Activated CD8-positive, alpha-beta T cell treated with anti-CD3 and anti-CD28 coated beads for 36 hours (primary cell): ENCODE measurements at regions of chr17 and their contacts with region 1.

Region 1: DNA sequence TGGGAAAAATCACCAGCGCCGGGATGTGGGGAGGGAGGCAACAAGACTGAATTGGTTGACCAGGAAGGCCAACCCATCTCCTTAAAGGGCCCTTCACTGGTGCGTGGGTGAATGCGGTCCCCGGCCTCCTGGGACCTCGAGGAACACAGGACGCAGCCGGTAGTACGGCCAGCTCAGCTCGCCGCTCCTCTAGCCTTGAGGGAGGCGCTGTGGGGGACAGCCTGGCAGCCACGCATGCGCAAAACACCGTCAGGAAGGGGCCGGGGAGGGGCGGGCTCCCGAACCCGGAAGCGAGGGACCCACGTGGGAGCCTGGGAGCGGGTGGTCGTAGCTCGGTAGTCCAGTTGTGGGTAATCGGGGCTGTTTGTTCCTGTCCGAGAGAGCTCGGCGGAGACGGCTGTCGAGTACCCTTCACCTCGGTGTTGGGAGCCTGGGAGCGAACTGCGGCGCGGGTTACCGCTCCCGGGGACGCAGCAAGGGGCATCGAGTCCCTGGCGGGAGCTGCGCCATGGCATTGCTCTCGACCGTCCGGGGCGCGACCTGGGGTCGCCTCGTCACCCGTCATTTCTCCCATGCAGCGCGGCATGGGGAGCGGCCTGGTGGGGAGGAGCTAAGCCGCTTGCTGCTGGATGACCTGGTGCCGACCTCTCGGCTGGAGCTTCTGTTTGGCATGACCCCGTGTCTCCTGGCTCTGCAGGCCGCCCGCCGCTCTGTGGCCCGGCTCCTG is at the start of gene MRM1:
- DNase-seq: peak; percentile 92
- ATAC-seq: peak; percentile 88
- H3K4me3 Mint-ChIP-seq: peak within 1 kb of the TSS; percentile 91
- H3K27ac Mint-ChIP-seq: peak within 1 kb of the TSS; percentile 87
- H3K4me1 Mint-ChIP-seq: peaks cover 37% of the 10 kb centered on the region
- H3K27me3 Mint-ChIP-seq: no peaks in the 10 kb centered on the region
- CTCF ChIP-seq: no peak
- total RNA-seq, gene MRM1: 24.5 to 27.4 TPM

Region 2: GRCh38 chr17:36586138-36586537 is 15.3 kb before region 1 on chr17:
- CTCF ChIA-PET with region 1: interaction called, 45 read pairs
- POLR2A ChIA-PET with region 1: interaction called, 3 read pairs
- intact Hi-C with region 1: no loop called
- DNase-seq: no peak
- ATAC-seq: no peak
- H3K4me3 Mint-ChIP-seq: no peak overlapping the region
- H3K27ac Mint-ChIP-seq: no peak overlapping the region
- H3K4me1 Mint-ChIP-seq: peaks cover 15% of the 10 kb centered on the region
- H3K27me3 Mint-ChIP-seq: no peaks in the 10 kb centered on the region
- CTCF ChIP-seq: no peak

Region 3: GRCh38 chr17:36629252-36629847 is 27.9 kb after region 1 on chr17:
- CTCF ChIA-PET with region 1: interaction called, 21 read pairs
- POLR2A ChIA-PET with region 1: interaction called, 4 read pairs
- intact Hi-C with region 1: no loop called
- DNase-seq: peak; percentile 85
- ATAC-seq: peak; percentile 96
- H3K4me3 Mint-ChIP-seq: no peak overlapping the region
- H3K27ac Mint-ChIP-seq: no peak overlapping the region
- H3K4me1 Mint-ChIP-seq: no peaks in the 10 kb centered on the region
- H3K27me3 Mint-ChIP-seq: peaks cover 5% of the 10 kb centered on the region
- CTCF ChIP-seq: peak; percentile 95

Region 4: DNA sequence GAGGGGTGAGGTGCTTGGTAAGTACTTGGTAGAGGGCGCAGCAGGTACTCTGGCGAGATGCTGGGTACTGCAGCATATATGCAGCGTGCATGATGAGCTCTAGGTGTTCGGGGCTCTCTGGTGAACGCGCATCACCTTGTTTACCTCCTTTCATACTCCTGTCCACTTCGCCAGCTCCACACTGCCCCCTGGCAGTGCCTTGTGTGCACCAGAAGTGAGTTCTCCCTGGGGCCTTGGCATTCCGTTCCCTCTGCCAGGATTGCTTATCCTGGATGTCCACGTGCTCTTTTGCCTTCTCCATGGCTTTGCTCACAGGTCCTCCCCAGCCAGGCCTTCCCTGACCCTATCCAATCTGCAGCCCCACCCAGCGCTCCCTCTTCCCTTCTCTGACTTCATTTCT is 154.1 kb after region 1 on chr17:
- CTCF ChIA-PET with region 1: interaction called, 15 read pairs
- POLR2A ChIA-PET with region 1: no interaction called
- intact Hi-C with region 1: no loop called
- DNase-seq: peak; percentile 67
- ATAC-seq: peak; percentile 65
- H3K4me3 Mint-ChIP-seq: no peak overlapping the region
- H3K27ac Mint-ChIP-seq: no peak overlapping the region
- H3K4me1 Mint-ChIP-seq: no peaks in the 10 kb centered on the region
- H3K27me3 Mint-ChIP-seq: peaks cover 2% of the 10 kb centered on the region
- CTCF ChIP-seq: peak; percentile 65